Panc1 (cell line): ENCODE measurements at regions of chr15 and their contacts with region 1.

Region 1: GRCh38 chr15:30073915-30074314 is 8.8 kb upstream of the GOLGA8J start:
- DNase-seq: no peak
- ATAC-seq: no peak
- H3K4me3 ChIP-seq: no peak overlapping the region
- H3K27ac ChIP-seq: no peak overlapping the region
- H3K4me1 ChIP-seq: no peaks in the 10 kb centered on the region
- H3K27me3 ChIP-seq: peaks cover 7% of the 10 kb centered on the region
- CTCF ChIP-seq: no peak

Region 2: GRCh38 chr15:29942143-29942542 is 131.8 kb before region 1 on chr15:
- CTCF ChIA-PET with region 1: no interaction called
- POLR2A ChIA-PET with region 1: no interaction called
- in situ Hi-C with region 1: no loop called
- intact Hi-C with region 1: loop called (anchors 10 kb)
- DNase-seq: no peak
- ATAC-seq: no peak
- H3K4me3 ChIP-seq: no peak overlapping the region
- H3K27ac ChIP-seq: no peak overlapping the region
- H3K4me1 ChIP-seq: no peaks in the 10 kb centered on the region
- H3K27me3 ChIP-seq: no peaks in the 10 kb centered on the region
- CTCF ChIP-seq: peak; percentile 58